ENCODE measurements at regions of chr14 and their contacts with region 1.

Region 1: DNA sequence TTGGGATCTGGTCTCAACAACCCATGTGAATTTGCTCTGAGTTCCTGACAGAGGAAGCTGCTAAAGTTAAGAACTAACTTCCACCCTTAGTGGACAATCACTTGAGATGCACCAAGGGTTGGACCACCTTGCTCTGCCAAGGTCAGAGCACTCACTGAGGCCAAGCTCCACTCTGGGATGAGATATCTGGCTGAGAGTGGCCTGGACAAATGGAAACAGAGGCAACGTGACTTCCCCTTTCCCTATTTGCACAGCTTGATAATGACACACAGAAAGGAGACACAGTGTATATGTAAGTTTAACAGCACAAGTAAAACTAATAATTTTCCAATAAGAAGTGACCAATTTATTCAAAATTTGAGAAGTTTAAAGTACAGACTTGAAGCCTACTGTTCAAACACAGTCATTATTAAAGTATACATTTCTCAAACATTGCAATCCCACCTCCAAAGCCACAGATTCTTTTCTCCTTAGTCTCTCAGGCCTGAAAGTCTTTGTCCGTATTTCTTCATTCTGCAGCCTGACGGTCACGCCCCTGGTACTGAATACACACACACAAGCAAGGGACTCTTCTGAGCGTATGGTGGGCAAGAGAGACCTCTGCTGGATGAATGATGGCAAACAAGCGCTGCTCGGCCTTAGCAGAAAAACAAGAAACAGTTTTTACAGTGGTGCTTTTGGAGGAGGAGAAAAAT is 28.6 kb downstream of the TMEM30B start:
- DNase-seq: peak; percentile 77
- ATAC-seq: peak; percentile 98
- H3K4me3 ChIP-seq: no peak overlapping the region
- H3K27ac ChIP-seq: no peak overlapping the region
- H3K4me1 ChIP-seq: peaks cover 11% of the 10 kb centered on the region
- H3K27me3 ChIP-seq: peaks cover 0 to 3% of the 10 kb centered on the region in 2 experiments; a peak in 3 of 5 replicates
- CTCF ChIP-seq: peak; percentile 91
- EP300 ChIP-seq: no peak
- POLR2A ChIP-seq: no peak
- RAD21 ChIP-seq: peak; percentile 86

Region 2: GRCh38 chr14:60349663-60350365 is 902.7 kb before region 1 on chr14:
- CTCF ChIA-PET with region 1: interaction called, 5 read pairs
- POLR2A ChIA-PET with region 1: no interaction called
- in situ Hi-C with region 1: loop called (anchors 10 kb)
- intact Hi-C with region 1: no loop called
- DNase-seq: peak; percentile 21
- ATAC-seq: peak; percentile 83
- H3K4me3 ChIP-seq: no peak overlapping the region
- H3K27ac ChIP-seq: no peak overlapping the region
- H3K4me1 ChIP-seq: no peaks in the 10 kb centered on the region
- H3K27me3 ChIP-seq: no peaks in the 10 kb centered on the region
- CTCF ChIP-seq: peak; percentile 67
- EP300 ChIP-seq: no peak
- POLR2A ChIP-seq: no peak
- RAD21 ChIP-seq: no peak

Region 3: GRCh38 chr14:60734465-60735242 is 517.9 kb before region 1 on chr14 and contains the start of gene MNAT1:
- CTCF ChIA-PET with region 1: no interaction called
- POLR2A ChIA-PET with region 1: no interaction called
- in situ Hi-C with region 1: no loop called
- intact Hi-C with region 1: loop called (anchors 5 kb)
- DNase-seq: peak; percentile 66
- ATAC-seq: peak; percentile 98
- H3K4me3 ChIP-seq: peak within 1 kb of the TSS; percentile 86 to 97 (median 95)
- H3K27ac ChIP-seq: peak within 1 kb of the TSS; percentile 84
- H3K4me1 ChIP-seq: peaks cover 22% of the 10 kb centered on the region
- H3K27me3 ChIP-seq: no peaks in the 10 kb centered on the region; a peak in 1 of 5 replicates
- CTCF ChIP-seq: peak; percentile 42
- EP300 ChIP-seq: no peak; a peak in 1 of 4 replicates
- POLR2A ChIP-seq: peak; percentile 84 to 87
- RAD21 ChIP-seq: peak; percentile 39
- total RNA-seq, gene MNAT1: 94.8 and 130 TPM in 2 replicates

Region 4: DNA sequence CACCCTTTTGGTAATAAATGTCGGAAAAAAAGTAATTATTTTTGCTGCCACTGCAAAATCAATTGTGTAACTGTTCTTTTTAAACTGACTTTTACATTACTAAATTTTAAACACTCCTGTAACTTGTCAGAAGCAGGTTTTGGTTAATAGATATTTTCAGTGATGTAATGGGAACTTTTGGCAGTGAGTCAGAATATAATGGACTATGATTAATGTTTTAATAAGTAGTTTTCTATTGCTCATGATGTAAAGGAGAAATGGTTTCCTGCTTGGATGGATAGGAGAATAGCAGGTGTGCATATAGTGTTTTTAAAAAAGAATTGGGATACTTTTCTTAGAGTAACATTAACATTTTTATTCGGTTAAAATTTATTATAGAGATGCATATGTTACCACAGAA is 330.5 kb before region 1 on chr14:
- CTCF ChIA-PET with region 1: no interaction called
- POLR2A ChIA-PET with region 1: no interaction called
- in situ Hi-C with region 1: no loop called
- intact Hi-C with region 1: no loop called
- DNase-seq: no peak
- ATAC-seq: no peak
- H3K4me3 ChIP-seq: no peak overlapping the region
- H3K27ac ChIP-seq: no peak overlapping the region
- H3K4me1 ChIP-seq: no peaks in the 10 kb centered on the region
- H3K27me3 ChIP-seq: no peaks in the 10 kb centered on the region; a peak in 1 of 5 replicates
- CTCF ChIP-seq: no peak
- EP300 ChIP-seq: no peak
- POLR2A ChIP-seq: no peak
- RAD21 ChIP-seq: no peak

Region 5: GRCh38 chr14:60980811-60981632 is 271.5 kb before region 1 on chr14 and contains the starts of genes SLC38A6 and TRMT5:
- CTCF ChIA-PET with region 1: no interaction called
- POLR2A ChIA-PET with region 1: no interaction called
- in situ Hi-C with region 1: no loop called
- intact Hi-C with region 1: loop called (anchors 2 kb)
- DNase-seq: peak; percentile 91
- ATAC-seq: peak; percentile 97
- H3K4me3 ChIP-seq: peak within 1 kb of the TSS; percentile 62 to 93 (median 90)
- H3K27ac ChIP-seq: peak within 1 kb of the TSS; percentile 82
- H3K4me1 ChIP-seq: peaks cover 44% of the 10 kb centered on the region
- H3K27me3 ChIP-seq: no peaks in the 10 kb centered on the region; a peak in 1 of 5 replicates
- CTCF ChIP-seq: 0 out of 2 replicates have a peak, but pooled peaks have one; percentile 13
- EP300 ChIP-seq: peak; percentile 16 to 43; a peak in 2 of 4 replicates
- POLR2A ChIP-seq: peak; percentile 71 to 90
- RAD21 ChIP-seq: peak; percentile 19; the same call in 1 of the 2 replicates
- total RNA-seq, gene SLC38A6: 12.4 and 22.1 TPM in 2 replicates
- total RNA-seq, gene TRMT5: 16.0 and 26.0 TPM in 2 replicates

Region 6: DNA sequence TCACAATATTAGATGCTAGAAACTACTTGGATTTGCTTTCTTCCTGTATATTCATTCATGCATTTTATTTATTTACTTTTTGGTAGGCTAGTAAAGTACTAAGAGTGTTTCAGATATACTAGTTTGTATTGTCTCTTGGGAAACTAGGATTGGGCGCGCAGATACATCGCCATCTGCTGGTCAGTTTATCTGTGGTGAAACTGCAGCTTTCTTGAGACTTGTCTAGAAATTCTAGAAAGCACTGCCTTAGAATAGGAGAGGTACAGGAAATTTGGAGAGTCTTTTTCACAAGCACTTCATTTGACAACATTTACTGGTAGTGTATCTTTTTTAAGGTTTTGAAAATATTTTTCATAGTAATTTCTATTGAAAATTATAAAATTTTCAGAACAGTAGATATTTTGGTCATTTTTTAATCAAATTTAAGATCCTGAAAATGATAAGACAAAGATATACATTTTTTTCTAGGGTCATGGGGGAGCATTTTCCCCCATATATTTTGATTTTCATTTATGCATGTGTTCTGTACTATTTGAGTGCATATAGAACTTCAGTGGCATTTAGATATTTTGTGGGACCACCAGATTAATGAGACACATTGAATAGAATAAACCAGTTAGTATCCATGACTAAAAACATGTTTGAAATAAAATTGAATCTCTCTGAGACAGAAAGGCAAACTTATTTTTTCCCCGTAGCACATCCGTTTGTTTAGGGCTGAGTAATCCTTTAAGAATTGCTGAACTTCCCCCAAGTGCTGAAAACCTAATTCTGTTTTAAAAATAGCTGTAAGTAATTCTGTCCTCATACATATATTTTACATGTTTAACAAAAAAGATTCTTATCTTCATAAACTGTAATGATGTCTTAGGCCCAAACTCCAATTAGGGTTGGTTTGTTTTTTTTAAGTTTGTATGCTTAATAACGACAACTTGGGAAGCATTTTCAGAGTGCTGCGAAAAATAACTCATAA is 227.0 kb before region 1 on chr14:
- CTCF ChIA-PET with region 1: interaction called, 7 read pairs
- POLR2A ChIA-PET with region 1: no interaction called
- in situ Hi-C with region 1: no loop called
- intact Hi-C with region 1: loop called (anchors 2 kb)
- DNase-seq: peak; percentile 57
- ATAC-seq: peak; percentile 59; the same call in 2 of the 3 replicates
- H3K4me3 ChIP-seq: no peak overlapping the region
- H3K27ac ChIP-seq: no peak overlapping the region
- H3K4me1 ChIP-seq: peaks cover 10% of the 10 kb centered on the region; the same call in 1 of the 2 replicates
- H3K27me3 ChIP-seq: no peaks in the 10 kb centered on the region
- CTCF ChIP-seq: peak; percentile 80
- EP300 ChIP-seq: no peak
- POLR2A ChIP-seq: no peak
- RAD21 ChIP-seq: peak; percentile 61

Region 7: GRCh38 chr14:61103481-61104339 is 148.8 kb before region 1 on chr14:
- CTCF ChIA-PET with region 1: no interaction called
- POLR2A ChIA-PET with region 1: no interaction called
- in situ Hi-C with region 1: no loop called
- intact Hi-C with region 1: loop called (anchors 5 kb)
- DNase-seq: peak; percentile 78
- ATAC-seq: peak; percentile 20
- H3K4me3 ChIP-seq: peak overlapping the region; percentile 8 to 56 (median 38); a peak in 5 of 6 replicates
- H3K27ac ChIP-seq: peak overlapping the region; percentile 87
- H3K4me1 ChIP-seq: peaks cover 59% of the 10 kb centered on the region
- H3K27me3 ChIP-seq: no peaks in the 10 kb centered on the region
- CTCF ChIP-seq: no peak
- EP300 ChIP-seq: peak in 1 of 2 experiments; percentile 43; a peak in 1 of 4 replicates
- POLR2A ChIP-seq: 0 out of 4 replicates have a peak, but pooled peaks of 1 of the 2 experiments have one; percentile 2
- RAD21 ChIP-seq: no peak

Region 8: DNA sequence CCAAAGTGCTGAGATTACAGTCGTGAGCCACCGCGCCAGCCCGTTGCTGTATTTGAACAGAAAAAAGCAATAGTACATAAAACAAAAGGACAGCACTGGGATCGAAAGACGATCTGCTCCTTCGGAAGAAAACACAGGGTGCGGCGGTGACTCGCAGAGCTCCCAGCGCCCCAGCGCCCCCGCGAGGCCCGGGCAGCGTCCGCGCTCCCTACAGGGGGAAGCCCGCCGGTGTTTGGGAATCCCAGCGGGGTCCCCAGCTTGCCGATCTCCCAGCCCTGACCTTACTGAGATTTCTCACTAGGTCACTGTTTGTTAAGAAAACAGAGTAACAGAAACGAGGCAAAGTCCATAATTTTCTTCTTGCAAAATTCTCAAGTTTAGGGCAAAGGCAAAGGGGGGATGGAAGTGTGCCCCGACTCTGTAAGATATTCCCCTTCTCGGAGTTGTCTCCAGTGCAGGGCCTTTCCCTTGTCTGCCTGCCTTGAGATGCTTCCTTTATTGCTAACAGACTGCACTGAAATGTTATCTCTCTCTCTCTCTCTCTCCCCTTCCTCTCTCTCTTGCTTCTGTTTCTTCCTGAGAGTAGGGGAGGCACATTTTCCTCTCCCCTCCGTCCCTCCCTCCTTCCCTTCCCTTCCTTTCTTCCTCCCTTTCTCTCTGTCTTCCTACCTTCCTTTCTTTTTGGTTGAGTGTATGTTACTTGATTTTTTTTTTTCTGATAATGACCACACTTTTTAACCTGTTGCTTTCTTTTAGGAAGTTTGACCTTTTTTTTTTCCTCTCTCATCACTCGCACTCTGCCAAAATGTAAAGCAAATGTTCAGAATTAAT is 63.3 kb before region 1 on chr14:
- CTCF ChIA-PET with region 1: no interaction called
- POLR2A ChIA-PET with region 1: no interaction called
- in situ Hi-C with region 1: no loop called
- intact Hi-C with region 1: loop called (anchors 1 kb)
- DNase-seq: peak; percentile 48
- ATAC-seq: peak; percentile 98
- H3K4me3 ChIP-seq: peak overlapping the region; percentile 49 to 72 (median 52); a peak in 5 of 6 replicates
- H3K27ac ChIP-seq: no peak overlapping the region
- H3K4me1 ChIP-seq: peaks cover 32% of the 10 kb centered on the region
- H3K27me3 ChIP-seq: peaks cover 0 to 4% of the 10 kb centered on the region in 2 experiments; a peak in 2 of 5 replicates
- CTCF ChIP-seq: peak; percentile 83
- EP300 ChIP-seq: no peak
- POLR2A ChIP-seq: no peak
- RAD21 ChIP-seq: peak; percentile 78

Measured in HepG2 (cell line).